ENCODE measurements at regions of chr18 and their contacts with region 1.

Region 1: GRCh38 chr18:76492669-76493212 is 2.3 kb downstream of the ZNF516 start:
- DNase-seq: peak; percentile 93 to 100
- H3K4me3 ChIP-seq: peak overlapping the region; percentile 54 to 76 (median 66)
- H3K27ac ChIP-seq: no peak overlapping the region
- H3K4me1 ChIP-seq: peaks cover 3 to 12% (median 9%) of the 10 kb centered on the region in 4 experiments
- H3K27me3 ChIP-seq: peaks cover 6 to 34% (median 17%) of the 10 kb centered on the region in 4 experiments
- CTCF ChIP-seq: no peak
- EP300 ChIP-seq: no peak
- POLR2A ChIP-seq: no peak; a peak in 1 of 3 replicates
- RAD21 ChIP-seq: no peak

Region 2: GRCh38 chr18:76328140-76328539 is 164.6 kb before region 1 on chr18:
- CTCF ChIA-PET with region 1: no interaction called
- POLR2A ChIA-PET with region 1: no interaction called
- DNase-seq: no peak
- H3K4me3 ChIP-seq: no peak overlapping the region
- H3K27ac ChIP-seq: no peak overlapping the region
- H3K4me1 ChIP-seq: no peaks in the 10 kb centered on the region
- H3K27me3 ChIP-seq: no peaks in the 10 kb centered on the region
- CTCF ChIP-seq: no peak
- EP300 ChIP-seq: no peak
- POLR2A ChIP-seq: no peak
- RAD21 ChIP-seq: no peak

Region 3: DNA sequence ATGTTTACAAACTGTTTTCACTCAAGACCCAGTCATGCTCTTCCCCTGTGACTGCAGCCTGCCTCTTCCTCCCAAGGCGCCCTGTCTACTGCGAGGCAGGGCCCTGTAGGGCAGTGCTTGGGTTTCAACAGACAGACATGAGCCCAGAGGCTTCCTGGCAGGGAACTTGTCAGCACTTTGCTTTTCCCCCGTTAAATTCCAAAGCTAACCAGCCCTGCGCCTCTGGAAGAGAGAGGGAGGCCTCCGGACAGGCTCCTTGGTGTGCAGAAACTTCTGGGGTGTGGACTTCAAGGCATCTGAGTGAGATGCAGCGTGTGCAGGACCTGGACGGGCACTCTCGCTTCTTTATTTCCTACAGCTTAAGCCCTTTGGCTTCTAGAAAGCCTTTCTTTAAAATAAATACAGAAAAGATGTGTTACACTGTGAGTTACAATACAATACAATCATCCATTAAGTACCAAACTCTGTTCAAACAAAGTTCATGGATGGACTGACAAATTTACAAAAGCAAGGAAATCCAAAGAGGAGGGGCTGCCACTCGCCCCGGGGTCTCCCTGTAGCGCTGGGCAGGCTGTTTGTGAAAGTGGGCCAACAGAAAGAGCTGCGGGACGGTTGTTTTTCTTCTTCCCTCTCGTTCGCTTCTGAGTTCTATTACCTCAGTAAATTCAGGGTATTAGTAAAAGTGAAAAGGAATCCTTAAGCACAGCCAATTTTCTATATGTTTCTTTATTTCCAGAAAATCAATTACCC is 11.1 kb after region 1 on chr18:
- CTCF ChIA-PET with region 1: interaction called, 4 read pairs
- POLR2A ChIA-PET with region 1: interaction called, 14 read pairs
- DNase-seq: no peak
- H3K4me3 ChIP-seq: no peak overlapping the region
- H3K27ac ChIP-seq: no peak overlapping the region
- H3K4me1 ChIP-seq: peaks cover 0 to 5% (median 4%) of the 10 kb centered on the region in 4 experiments; a peak in 3 of 7 replicates
- H3K27me3 ChIP-seq: no peaks in the 10 kb centered on the region; a peak in 1 of 7 replicates
- CTCF ChIP-seq: no peak
- EP300 ChIP-seq: no peak
- POLR2A ChIP-seq: no peak
- RAD21 ChIP-seq: no peak

Region 4: DNA sequence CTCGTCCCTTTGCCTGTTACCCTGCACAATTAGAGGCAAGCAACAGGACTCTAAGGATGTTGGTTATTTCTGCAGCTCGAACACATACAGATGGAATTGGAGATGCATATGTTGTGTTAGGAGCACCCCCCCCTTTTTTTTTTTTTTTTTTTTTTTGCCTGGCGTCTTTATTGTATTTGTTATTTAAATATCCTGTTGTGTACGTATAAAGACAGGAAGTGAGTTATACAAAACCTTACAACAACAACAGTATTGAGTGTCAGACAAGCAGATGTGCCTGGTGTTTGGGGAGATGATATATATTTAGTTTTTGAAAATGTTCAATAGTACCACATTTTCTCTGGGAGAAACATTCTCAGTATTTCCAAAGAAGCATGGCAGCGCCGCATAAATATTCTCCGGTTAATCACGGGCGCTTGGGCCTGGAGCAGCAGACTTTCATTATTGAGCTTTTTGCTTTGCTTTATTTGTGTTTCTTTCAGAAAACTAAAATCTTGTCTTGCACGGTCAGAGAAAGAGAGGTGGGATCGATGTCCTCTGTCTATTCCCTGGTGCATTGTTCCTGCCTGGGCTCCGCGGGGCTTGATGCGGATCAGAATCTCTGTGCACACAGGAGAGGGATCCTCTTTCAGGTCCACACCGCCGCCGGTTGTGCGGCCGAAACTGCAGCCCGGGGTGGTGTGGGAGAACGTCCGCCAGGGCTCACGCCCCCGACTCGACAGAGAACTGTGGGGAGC is 25.6 kb after region 1 on chr18:
- CTCF ChIA-PET with region 1: interaction called, 4 read pairs
- POLR2A ChIA-PET with region 1: interaction called, 13 read pairs
- DNase-seq: peak in 1 of 2 experiments; percentile 68
- H3K4me3 ChIP-seq: peak overlapping the region; percentile 42 to 61 (median 51); a peak in 6 of 8 replicates
- H3K27ac ChIP-seq: no peak overlapping the region
- H3K4me1 ChIP-seq: peaks cover 3 to 11% (median 6%) of the 10 kb centered on the region in 4 experiments; a peak in 5 of 7 replicates
- H3K27me3 ChIP-seq: peaks cover 0 to 2% (median 0%) of the 10 kb centered on the region in 4 experiments; a peak in 2 of 7 replicates
- CTCF ChIP-seq: no peak
- EP300 ChIP-seq: no peak
- POLR2A ChIP-seq: peak in 1 of 2 experiments; percentile 68; a peak in 2 of 3 replicates
- RAD21 ChIP-seq: no peak